ENCODE measurements at regions of chr1 and their contacts with region 1.

Region 1: DNA sequence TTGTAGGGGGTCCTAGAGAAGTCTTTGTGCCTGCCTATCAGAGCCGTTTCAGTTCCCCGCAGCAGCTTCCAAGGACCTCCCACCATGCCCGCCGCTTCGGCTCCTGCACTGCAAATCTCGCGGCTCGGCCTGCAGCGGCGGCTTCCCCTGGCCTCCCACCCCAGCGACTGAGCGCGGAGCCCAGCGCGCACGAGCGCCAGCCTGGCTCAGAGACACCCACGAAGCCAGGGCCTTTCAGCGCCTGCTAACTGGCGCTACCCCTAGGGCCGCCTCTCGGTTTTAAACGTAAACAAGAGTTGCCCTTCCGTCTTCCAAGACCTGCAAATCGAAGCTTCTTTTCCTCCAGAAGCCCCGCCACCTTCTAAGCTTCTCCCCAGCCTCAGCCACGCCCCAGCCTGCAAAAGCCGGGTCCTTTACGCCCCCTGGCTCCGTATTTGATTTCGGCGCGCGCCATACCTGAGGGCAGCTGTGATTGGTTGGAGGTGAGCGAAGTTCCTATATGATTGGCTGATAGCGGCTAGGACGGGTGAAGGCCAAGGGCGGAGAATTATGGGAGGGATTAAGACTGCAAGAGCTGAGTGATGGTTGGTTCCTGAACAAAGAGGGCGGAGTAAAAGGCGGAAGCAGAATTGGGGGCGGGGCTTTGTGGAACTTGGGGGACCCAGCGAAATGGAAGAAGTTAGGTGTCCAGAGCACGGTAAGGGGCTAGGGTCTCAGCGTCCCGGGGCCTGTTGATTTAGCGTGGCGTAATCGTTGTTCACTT is at the start of gene TTF2:
- DNase-seq: peak; percentile 99
- H3K4me3 ChIP-seq: peak within 1 kb of the TSS; percentile 78 to 99 (median 87)
- H3K27ac ChIP-seq: peak within 1 kb of the TSS; percentile 85
- H3K4me1 ChIP-seq: peaks cover 26% of the 10 kb centered on the region
- H3K27me3 ChIP-seq: no peaks in the 10 kb centered on the region
- CTCF ChIP-seq: peak in 1 of 2 donors; percentile 26
- total RNA-seq, gene TTF2: 15.5 to 41.3 TPM

Region 2: DNA sequence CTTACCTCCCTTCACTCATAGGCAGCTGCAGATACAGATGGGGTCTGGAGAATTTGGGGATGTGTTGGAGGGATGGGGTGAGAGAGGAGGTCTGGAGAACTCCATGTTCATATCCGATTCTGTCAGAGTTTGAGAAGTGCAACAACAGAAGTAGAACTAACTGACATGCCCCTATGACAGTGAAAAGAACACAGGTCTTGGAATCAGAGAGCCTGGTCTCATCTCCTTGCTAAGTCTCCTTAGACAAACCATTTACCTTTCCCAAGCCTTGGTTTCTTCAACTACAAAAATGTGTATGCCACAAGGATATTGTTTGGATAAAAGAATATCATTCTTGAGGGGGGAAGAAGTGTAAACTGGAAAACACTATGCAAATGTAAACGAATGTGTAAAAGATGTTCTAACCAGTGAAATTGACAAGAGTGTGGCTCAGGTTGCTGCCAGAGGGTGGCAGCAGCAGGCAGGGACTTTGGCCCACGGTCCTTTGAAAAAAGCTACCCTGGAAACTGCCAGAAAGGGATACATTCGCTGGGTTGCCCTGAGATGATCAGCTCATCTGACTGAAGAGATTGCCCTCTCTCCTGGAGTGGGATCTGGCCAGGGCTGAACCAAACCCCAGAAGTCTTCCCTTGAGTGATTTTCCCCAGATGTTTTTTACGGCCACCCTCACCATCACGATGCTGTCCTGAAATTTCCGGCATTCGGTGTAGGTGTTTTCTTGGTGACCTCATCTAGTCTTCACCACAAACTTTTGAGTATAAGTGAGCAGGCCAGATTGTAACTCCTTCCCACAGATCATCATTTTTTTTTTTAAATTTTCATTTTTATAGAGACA is 322.6 kb before region 1 on chr1:
- CTCF ChIA-PET with region 1: interaction called, 4 read pairs
- dilution Hi-C with region 1: loop called (anchors 25 kb)
- in situ Hi-C with region 1: no loop called
- intact Hi-C with region 1: loop called (anchors 1 kb)
- DNase-seq: peak; percentile 49
- H3K4me3 ChIP-seq: no peak overlapping the region
- H3K27ac ChIP-seq: no peak overlapping the region
- H3K4me1 ChIP-seq: no peaks in the 10 kb centered on the region
- H3K27me3 ChIP-seq: no peaks in the 10 kb centered on the region
- CTCF ChIP-seq: peak; percentile 84 to 90

Region 3: DNA sequence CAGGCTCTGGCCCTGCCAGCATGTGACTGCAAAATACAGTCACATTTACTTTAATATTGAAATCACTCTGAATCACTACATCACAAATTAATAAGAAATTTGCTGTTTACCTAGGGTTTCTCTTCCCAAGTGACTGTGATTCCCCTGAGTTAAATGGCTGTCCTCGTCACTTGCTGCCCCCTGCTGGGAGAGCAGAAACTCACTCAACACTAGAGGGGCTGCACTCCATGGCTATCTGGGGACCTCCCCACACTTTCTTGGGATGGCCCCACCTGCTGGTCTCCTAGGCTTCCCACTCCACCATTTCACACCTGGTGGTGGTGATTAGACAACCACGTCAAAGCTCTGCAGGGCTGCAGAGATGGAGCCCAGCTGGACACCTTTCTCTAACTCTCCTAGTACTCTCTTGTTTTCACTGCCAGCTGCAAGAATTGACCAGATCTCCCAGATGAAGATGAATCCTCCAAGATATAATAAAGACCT is 242.2 kb before region 1 on chr1:
- CTCF ChIA-PET with region 1: no interaction called
- dilution Hi-C with region 1: no loop called
- in situ Hi-C with region 1: no loop called
- intact Hi-C with region 1: loop called (anchors 1 kb)
- DNase-seq: peak; percentile 63
- H3K4me3 ChIP-seq: no peak overlapping the region
- H3K27ac ChIP-seq: no peak overlapping the region
- H3K4me1 ChIP-seq: peaks cover 12% of the 10 kb centered on the region
- H3K27me3 ChIP-seq: no peaks in the 10 kb centered on the region
- CTCF ChIP-seq: peak; percentile 78 to 89

Region 4: DNA sequence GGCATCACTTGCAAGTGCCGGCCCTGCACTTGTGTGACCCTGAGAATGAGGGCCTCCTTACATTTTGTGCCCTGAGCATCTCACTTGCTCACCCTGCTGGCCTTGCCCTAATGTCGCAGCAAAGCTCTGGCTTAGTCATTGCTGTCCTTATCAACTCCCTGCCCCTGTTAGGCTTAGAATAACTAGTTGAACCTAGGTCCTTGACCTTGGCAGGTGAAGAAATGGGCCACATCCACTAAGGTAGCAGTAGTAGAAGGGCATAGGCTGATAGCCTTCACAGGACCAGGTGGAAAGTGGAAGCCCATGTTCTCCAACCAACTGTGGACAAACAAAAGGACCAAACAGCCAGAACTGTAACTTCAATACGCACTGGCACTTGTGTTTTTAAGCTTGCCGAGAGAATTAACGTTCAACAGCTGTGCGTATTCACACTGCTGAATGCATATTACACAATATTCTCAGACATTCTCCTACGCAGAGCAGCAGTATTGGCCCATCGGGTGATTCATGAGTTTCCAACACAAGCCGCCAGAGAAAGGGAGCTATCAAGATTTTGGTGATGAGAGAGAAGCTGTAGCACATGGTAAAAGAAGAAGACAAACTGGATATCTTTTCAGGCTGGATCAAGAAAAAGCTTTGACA is 177.9 kb before region 1 on chr1:
- CTCF ChIA-PET with region 1: no interaction called
- dilution Hi-C with region 1: no loop called
- in situ Hi-C with region 1: no loop called
- intact Hi-C with region 1: loop called (anchors 1 kb)
- DNase-seq: peak; percentile 50
- H3K4me3 ChIP-seq: no peak overlapping the region
- H3K27ac ChIP-seq: no peak overlapping the region
- H3K4me1 ChIP-seq: peaks cover 42% of the 10 kb centered on the region
- H3K27me3 ChIP-seq: no peaks in the 10 kb centered on the region
- CTCF ChIP-seq: peak; percentile 25 to 65

Region 5: DNA sequence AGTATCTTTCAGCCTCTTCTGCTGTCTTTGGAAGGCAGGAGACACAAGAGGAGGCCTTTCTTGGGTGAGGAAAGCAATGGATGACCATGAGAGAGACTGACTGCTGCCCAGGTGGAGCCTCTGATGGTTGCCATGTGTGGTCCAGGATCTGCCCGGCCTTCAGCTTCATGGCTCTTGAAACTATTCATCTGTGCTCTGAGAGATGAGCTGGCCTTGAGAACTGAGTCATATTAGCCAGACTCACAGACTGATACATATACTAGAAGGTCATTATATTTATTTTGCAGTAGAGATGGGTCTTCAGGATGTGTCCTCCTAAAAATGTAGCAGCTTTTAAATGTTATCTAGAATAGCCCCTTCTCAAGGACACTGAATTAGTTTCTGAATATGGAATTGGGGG is 116.4 kb before region 1 on chr1:
- CTCF ChIA-PET with region 1: no interaction called
- dilution Hi-C with region 1: no loop called
- in situ Hi-C with region 1: no loop called
- intact Hi-C with region 1: loop called (anchors 10 kb)
- DNase-seq: no peak
- H3K4me3 ChIP-seq: no peak overlapping the region
- H3K27ac ChIP-seq: no peak overlapping the region
- H3K4me1 ChIP-seq: no peaks in the 10 kb centered on the region
- H3K27me3 ChIP-seq: no peaks in the 10 kb centered on the region
- CTCF ChIP-seq: no peak

Region 6: GRCh38 chr1:117084231-117084630 is 24.4 kb after region 1 on chr1:
- CTCF ChIA-PET with region 1: no interaction called
- dilution Hi-C with region 1: no loop called
- in situ Hi-C with region 1: no loop called
- intact Hi-C with region 1: no loop called
- DNase-seq: no peak
- H3K4me3 ChIP-seq: no peak overlapping the region
- H3K27ac ChIP-seq: no peak overlapping the region
- H3K4me1 ChIP-seq: no peaks in the 10 kb centered on the region
- H3K27me3 ChIP-seq: no peaks in the 10 kb centered on the region
- CTCF ChIP-seq: no peak

Region 7: GRCh38 chr1:117512743-117513321 is 453.0 kb after region 1 on chr1:
- CTCF ChIA-PET with region 1: no interaction called
- dilution Hi-C with region 1: no loop called
- in situ Hi-C with region 1: no loop called
- intact Hi-C with region 1: loop called (anchors 10 kb)
- DNase-seq: peak; percentile 6
- H3K4me3 ChIP-seq: no peak overlapping the region
- H3K27ac ChIP-seq: no peak overlapping the region
- H3K4me1 ChIP-seq: no peaks in the 10 kb centered on the region
- H3K27me3 ChIP-seq: no peaks in the 10 kb centered on the region
- CTCF ChIP-seq: peak; percentile 46 to 63

Measured in mammary epithelial cell (primary cell).